PC-3 (cell line): ENCODE measurements at regions of chr1 and their contacts with region 1.

Region 1: DNA sequence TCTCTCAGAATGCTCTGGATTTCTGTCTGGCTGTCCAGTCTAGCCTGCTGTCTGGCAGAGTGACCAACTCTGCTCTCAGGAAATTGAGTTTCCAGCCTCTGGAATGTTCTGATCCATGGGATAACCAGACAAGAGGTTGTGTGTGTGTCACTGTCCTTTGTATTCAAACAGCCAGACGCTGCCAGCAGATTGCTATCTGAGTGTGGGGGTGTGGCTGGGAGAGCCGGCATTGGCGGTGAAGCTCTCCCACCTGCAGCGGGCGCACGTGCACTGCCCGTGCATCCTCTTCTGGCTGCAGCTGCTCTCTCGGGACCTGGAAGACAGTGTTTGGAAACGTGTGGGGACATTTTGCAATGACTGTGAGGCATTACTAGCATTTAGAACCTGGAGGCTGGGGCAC is 26.1 kb downstream of the PKP1 start:
- DNase-seq: peak; percentile 100
- ATAC-seq: peak; percentile 37
- H3K4me3 ChIP-seq: 0 out of 2 replicates have a peak overlapping the region, but pooled peaks have one; percentile 1
- H3K27ac ChIP-seq: peak overlapping the region; percentile 89
- H3K4me1 ChIP-seq: peaks cover 72% of the 10 kb centered on the region
- H3K27me3 ChIP-seq: no peaks in the 10 kb centered on the region
- CTCF ChIP-seq: peak; percentile 81

Region 2: DNA sequence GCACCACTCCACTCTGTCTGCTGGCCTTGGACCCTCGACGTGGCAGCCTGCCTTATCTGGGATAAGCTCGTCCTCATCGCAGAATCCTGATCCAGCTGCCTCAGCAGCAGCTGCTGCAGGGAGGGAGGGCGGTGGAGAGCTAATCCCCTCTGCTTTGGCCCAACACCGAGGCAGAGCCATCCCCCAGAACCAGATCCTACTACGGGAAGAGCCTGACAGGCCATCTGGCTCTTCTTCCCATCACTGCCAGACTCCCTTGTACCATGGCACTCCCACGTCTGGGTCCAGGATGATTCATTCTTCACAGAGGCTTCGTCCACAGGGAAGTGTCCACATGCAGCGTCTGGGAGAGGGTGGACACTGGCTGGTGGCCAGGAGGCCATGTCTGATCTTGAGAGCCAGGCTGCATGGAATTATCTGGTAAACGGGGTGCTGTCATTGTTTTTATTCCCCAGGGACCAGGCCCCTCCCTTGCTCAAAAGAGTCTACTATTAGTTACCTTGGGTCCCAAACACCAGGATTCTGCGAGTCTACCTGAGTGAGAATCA is 40.7 kb before region 1 on chr1:
- CTCF ChIA-PET with region 1: interaction called, 4 read pairs
- POLR2A ChIA-PET with region 1: interaction called, 7 read pairs
- intact Hi-C with region 1: loop called (anchors 1 kb)
- DNase-seq: peak; percentile 89
- ATAC-seq: peak; percentile 34
- H3K4me3 ChIP-seq: no peak overlapping the region
- H3K27ac ChIP-seq: peak overlapping the region; percentile 83
- H3K4me1 ChIP-seq: peaks cover 44% of the 10 kb centered on the region
- H3K27me3 ChIP-seq: no peaks in the 10 kb centered on the region
- CTCF ChIP-seq: no peak

Region 3: DNA sequence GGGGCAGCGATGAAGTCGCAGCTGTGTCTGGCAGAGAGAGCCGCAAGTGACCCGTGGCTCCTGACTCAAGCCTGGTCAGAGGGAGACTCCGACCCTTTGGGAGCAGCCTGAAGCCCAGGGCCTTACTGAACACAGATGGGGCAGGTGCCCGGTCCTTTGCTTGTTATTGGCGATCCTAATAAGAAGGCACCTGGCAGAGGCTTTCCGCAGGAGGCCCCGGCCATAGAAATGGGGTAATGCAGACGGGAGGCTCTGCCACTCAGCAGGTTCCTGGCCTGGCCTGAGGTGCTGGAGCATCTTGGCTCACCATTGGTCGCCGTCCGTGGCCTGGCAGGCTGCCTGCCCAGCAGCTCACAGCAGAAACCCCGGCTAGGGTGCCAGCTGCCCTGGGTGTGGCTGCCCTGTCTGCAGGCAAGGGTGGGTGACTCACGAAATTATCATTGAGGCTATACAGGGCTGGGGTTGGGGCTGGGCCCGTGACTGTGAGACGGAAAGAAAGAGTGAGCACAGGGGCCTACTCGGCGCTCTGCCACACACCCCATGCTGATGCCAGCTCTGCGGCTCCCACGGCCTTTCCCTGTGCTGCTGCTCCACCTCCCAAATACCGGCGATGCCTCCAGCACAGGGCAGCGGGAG is 34.3 kb before region 1 on chr1:
- CTCF ChIA-PET with region 1: interaction called, 5 read pairs
- POLR2A ChIA-PET with region 1: interaction called, 7 read pairs
- intact Hi-C with region 1: loop called (anchors 2 kb)
- DNase-seq: peak; percentile 100
- ATAC-seq: peak; percentile 90
- H3K4me3 ChIP-seq: peak overlapping the region; percentile 2; the same call in 1 of the 2 replicates
- H3K27ac ChIP-seq: peak overlapping the region; percentile 88
- H3K4me1 ChIP-seq: peaks cover 37% of the 10 kb centered on the region
- H3K27me3 ChIP-seq: no peaks in the 10 kb centered on the region
- CTCF ChIP-seq: no peak

Region 4: GRCh38 chr1:201282931-201283829 is 26.2 kb before region 1 on chr1 and contains the start of gene PKP1:
- CTCF ChIA-PET with region 1: interaction called, 14 read pairs
- POLR2A ChIA-PET with region 1: interaction called, 20 read pairs
- intact Hi-C with region 1: loop called (anchors 1 kb)
- DNase-seq: peak; percentile 100
- ATAC-seq: peak; percentile 84
- H3K4me3 ChIP-seq: peak within 1 kb of the TSS; percentile 79
- H3K27ac ChIP-seq: peak within 1 kb of the TSS; percentile 74
- H3K4me1 ChIP-seq: peaks cover 60% of the 10 kb centered on the region
- H3K27me3 ChIP-seq: no peaks in the 10 kb centered on the region
- CTCF ChIP-seq: 0 out of 2 replicates have a peak, but pooled peaks have one; percentile 27
- total RNA-seq, gene PKP1: 211 and 259 TPM in 2 replicates

Region 5: GRCh38 chr1:201288766-201289165 is 20.7 kb before region 1 on chr1:
- CTCF ChIA-PET with region 1: interaction called, 14 read pairs
- POLR2A ChIA-PET with region 1: interaction called, 20 read pairs
- intact Hi-C with region 1: loop called (anchors 1 kb)
- DNase-seq: no peak
- ATAC-seq: no peak
- H3K4me3 ChIP-seq: peak overlapping the region; percentile 0; the same call in 1 of the 2 replicates
- H3K27ac ChIP-seq: peak overlapping the region; percentile 33
- H3K4me1 ChIP-seq: peaks cover 61% of the 10 kb centered on the region
- H3K27me3 ChIP-seq: no peaks in the 10 kb centered on the region
- CTCF ChIP-seq: peak; percentile 47; the same call in 1 of the 2 replicates

Region 6: DNA sequence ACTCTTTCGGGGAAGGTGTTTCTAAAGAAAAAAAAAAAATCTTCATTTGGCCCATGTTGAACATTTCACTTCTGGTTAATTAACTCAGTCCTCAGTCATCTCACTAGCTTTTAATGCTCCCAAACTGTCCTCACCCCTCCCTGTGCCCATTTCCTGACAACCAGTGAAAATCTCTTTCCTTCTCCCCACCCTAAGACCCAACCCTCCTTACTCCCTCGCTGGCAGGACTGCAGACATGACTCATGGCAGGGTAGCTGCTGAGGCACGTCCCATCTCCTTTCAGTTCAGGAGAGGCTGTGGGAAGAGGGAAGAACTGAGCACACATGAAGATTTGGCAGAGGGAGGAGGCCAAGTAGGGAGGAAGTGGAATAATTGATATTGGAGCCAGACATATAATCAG is 13.6 kb before region 1 on chr1:
- CTCF ChIA-PET with region 1: interaction called, 4 read pairs
- POLR2A ChIA-PET with region 1: interaction called, 12 read pairs
- intact Hi-C with region 1: loop called (anchors 1 kb)
- DNase-seq: peak; percentile 100
- ATAC-seq: peak; percentile 90
- H3K4me3 ChIP-seq: peak overlapping the region; percentile 3; the same call in 1 of the 2 replicates
- H3K27ac ChIP-seq: peak overlapping the region; percentile 67
- H3K4me1 ChIP-seq: peaks cover 49% of the 10 kb centered on the region
- H3K27me3 ChIP-seq: no peaks in the 10 kb centered on the region
- CTCF ChIP-seq: no peak

Region 7: DNA sequence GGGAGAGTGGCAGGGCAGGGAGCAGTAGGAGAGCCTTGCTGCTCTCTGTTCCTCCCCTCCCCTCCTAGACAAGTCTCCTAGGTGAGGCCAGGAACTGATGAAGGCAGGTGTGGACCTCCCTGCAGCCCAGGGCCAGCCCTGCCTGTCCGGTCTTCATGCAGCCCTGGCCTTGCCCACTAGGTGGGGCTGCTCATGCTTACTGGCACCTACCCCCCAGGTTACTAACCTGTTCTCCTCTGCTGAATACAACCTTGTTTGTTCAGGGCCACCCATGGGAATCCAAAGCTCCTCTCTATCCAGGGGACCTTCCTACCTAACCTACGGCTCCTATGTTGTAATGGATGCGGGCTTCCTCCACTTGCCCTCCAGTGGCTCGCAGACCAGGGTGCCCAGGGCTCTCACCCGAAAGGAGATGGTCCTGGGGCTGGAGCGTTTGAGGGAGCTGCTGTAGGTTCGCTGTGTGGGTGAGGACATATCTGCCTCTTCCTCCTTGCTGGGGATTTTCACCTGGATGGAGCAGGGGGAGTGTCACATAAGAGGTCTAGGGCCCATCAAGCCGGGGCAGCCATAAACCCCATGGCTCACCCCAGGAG is 76.0 kb after region 1 on chr1:
- CTCF ChIA-PET with region 1: no interaction called
- POLR2A ChIA-PET with region 1: interaction called, 10 read pairs
- intact Hi-C with region 1: no loop called
- DNase-seq: peak; percentile 99
- ATAC-seq: peak; percentile 74
- H3K4me3 ChIP-seq: no peak overlapping the region
- H3K27ac ChIP-seq: no peak overlapping the region
- H3K4me1 ChIP-seq: peaks cover 27% of the 10 kb centered on the region
- H3K27me3 ChIP-seq: no peaks in the 10 kb centered on the region
- CTCF ChIP-seq: peak; percentile 100